Activated CD4-positive, alpha-beta memory T cell treated with anti-CD3 and anti-CD28 coated beads for 36 hours (primary cell): ENCODE measurements at regions of chr2 and their contacts with region 1.

Region 1: DNA sequence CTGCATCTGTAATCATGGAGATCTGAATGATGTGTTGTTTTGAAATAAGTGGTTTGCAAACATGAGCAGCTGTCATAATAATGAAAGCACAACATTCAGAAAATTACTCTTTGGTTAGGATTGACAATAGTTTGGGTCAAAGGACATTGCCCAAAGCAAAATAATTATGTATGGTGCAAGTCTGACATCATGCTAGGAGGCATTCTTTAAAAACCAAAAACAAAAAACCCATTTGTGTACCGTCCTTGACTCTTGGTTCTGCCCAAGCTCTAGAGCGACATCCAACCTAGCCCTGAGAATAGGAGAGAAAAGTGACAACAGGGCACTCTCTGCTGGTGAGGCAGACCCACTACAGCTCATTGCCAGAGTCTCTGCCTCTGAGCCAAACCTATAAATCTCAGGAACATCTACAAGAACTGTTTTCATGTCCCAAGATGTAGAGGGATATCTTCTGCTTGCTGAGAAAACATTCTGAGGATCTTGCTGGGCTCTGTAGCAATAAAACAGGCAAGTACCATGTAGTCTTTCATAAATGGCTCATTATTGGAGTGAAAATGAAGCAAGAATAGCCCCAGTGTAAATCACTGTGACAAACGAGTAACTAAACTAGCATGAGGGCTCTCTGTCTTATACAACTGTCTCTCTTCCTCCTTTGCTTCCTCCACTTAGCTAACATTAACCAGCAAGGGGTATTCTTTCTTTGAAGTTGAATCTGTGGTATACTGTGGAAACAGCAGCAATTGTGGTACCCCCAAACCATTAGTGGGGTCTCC is 266.8 kb upstream of the CXCR4 start:
- DNase-seq: peak; percentile 60
- H3K4me3 Mint-ChIP-seq: no peak overlapping the region
- H3K27ac Mint-ChIP-seq: peak overlapping the region; percentile 96
- H3K4me1 Mint-ChIP-seq: peaks cover 45% of the 10 kb centered on the region
- H3K27me3 Mint-ChIP-seq: no peaks in the 10 kb centered on the region

Region 2: GRCh38 chr2:135797497-135798274 is 587.0 kb before region 1 on chr2:
- CTCF ChIA-PET with region 1: interaction called, 21 read pairs
- POLR2A ChIA-PET with region 1: no interaction called
- intact Hi-C with region 1: no loop called
- DNase-seq: peak; percentile 89
- H3K4me3 Mint-ChIP-seq: no peak overlapping the region
- H3K27ac Mint-ChIP-seq: no peak overlapping the region
- H3K4me1 Mint-ChIP-seq: peaks cover 12% of the 10 kb centered on the region
- H3K27me3 Mint-ChIP-seq: no peaks in the 10 kb centered on the region

Region 3: DNA sequence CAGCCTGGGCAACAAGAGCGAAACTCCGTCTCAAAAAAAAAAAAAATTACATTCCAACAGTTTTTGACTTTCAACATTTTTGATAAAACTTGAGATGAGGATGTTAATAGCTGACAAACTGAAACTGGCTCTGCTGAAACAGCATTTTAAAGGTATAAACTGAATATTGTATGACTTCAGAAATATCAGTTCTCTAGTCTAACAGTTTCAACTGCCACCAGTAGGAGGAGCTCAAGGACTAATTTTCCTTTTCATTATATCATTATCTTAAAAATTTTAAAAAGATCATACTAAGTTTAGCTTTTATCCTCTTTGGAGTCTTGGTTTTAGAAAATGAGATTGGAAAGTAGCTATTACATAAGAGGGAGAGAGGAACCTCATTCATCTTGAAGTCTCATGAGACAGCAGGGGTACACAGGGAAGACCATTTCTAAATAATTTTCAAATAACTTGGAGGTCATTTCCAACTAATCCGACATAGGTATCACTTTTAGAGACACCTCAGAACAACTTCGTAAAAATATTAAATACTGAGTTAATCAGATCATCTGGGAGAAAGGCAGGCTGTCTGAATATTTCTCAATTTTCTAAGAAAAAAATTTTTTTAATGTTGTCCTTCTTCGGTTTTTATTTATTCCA is 470.9 kb before region 1 on chr2:
- CTCF ChIA-PET with region 1: interaction called, 69 read pairs
- POLR2A ChIA-PET with region 1: interaction called, 4 read pairs
- intact Hi-C with region 1: loop called (anchors 1 kb)
- DNase-seq: no peak
- H3K4me3 Mint-ChIP-seq: no peak overlapping the region
- H3K27ac Mint-ChIP-seq: no peak overlapping the region
- H3K4me1 Mint-ChIP-seq: peaks cover 14% of the 10 kb centered on the region
- H3K27me3 Mint-ChIP-seq: no peaks in the 10 kb centered on the region

Region 4: GRCh38 chr2:135997380-135997779 is 387.3 kb before region 1 on chr2:
- CTCF ChIA-PET with region 1: no interaction called
- POLR2A ChIA-PET with region 1: no interaction called
- intact Hi-C with region 1: no loop called
- DNase-seq: no peak
- H3K4me3 Mint-ChIP-seq: no peak overlapping the region
- H3K27ac Mint-ChIP-seq: no peak overlapping the region
- H3K4me1 Mint-ChIP-seq: peaks cover 11% of the 10 kb centered on the region
- H3K27me3 Mint-ChIP-seq: no peaks in the 10 kb centered on the region

Region 5: GRCh38 chr2:136019306-136019705 is 365.4 kb before region 1 on chr2:
- CTCF ChIA-PET with region 1: no interaction called
- POLR2A ChIA-PET with region 1: no interaction called
- intact Hi-C with region 1: no loop called
- DNase-seq: no peak
- H3K4me3 Mint-ChIP-seq: no peak overlapping the region
- H3K27ac Mint-ChIP-seq: no peak overlapping the region
- H3K4me1 Mint-ChIP-seq: peaks cover 5% of the 10 kb centered on the region
- H3K27me3 Mint-ChIP-seq: no peaks in the 10 kb centered on the region

Region 6: DNA sequence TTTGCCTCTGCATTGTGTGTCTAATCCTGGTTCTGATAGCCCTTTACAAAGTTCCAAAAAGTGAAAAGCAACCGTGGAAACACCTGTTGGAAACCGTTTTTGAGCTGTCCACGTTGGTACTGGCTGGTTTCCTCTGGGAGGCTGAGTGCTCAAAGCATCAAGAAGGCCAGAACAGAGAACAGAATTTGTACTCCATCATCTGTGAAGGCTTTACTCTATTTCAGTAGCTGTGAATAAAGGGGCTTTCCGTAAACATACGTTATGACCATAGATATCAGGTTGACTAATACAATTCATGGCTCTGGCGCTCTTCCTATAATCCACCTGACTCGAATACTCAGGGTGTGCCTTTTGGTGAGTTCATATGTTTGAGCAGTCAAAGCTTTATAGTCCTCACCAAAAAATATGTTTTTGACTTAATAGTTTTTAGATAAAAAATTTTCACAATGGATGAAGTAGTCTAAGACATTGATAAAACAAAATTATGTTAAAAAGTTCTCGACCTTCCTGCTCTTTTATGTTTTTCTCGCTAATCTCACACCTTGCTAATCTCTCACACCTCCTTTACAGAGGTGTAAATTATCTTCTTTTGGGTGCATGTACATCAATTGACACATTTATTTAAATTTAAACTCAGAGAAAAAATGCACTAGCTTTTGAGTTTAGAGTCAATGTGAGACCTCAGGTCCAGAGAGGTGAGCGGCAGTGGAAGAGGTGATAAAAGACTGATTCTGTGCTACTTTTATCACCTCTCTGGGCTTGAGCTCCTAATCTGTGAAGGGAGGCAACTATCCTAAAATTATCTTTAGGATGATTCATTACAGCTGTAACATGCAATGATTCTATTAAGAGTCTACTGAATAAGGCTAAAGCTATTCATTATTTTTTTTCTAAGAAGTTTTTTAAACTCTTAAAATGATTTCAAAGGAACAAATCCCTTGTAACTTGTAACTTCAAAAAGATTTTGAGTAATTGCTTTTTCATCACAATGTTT is 332.1 kb before region 1 on chr2:
- CTCF ChIA-PET with region 1: interaction called, 17 read pairs
- POLR2A ChIA-PET with region 1: interaction called, 12 read pairs
- intact Hi-C with region 1: loop called (anchors 1 kb)
- DNase-seq: peak; percentile 35
- H3K4me3 Mint-ChIP-seq: peak overlapping the region; percentile 57
- H3K27ac Mint-ChIP-seq: peak overlapping the region; percentile 99
- H3K4me1 Mint-ChIP-seq: peaks cover 86% of the 10 kb centered on the region
- H3K27me3 Mint-ChIP-seq: no peaks in the 10 kb centered on the region

Region 7: DNA sequence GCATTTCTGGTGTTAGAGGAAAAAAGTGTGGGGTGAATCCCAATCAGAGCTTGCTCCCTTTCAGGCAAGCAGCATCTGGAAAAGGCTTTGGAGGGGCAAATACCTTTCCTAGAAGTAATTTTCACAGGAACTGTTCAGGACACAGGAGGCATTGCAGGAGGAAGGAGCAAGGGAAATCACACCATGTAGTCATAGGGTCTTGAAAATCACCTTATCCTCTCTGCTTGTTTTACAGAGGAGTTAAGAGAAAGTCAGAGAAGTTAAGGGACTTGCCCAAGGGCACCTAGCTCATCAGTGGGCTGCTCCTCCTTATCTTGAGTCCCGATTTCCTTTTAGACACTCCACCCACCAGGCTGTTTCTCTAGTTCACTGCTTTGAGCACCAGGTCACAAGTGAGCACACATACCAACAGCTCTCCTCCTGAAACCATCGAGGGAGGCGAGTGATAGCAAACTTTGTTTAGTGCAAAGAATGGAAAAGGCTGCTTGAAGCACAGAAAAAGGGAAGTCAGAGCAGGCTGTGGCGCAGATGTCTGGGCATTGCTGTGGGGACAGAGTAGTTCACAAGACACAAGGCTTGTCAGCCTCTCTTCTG is 177.6 kb before region 1 on chr2:
- CTCF ChIA-PET with region 1: no interaction called
- POLR2A ChIA-PET with region 1: no interaction called
- intact Hi-C with region 1: loop called (anchors 1 kb)
- DNase-seq: peak; percentile 65
- H3K4me3 Mint-ChIP-seq: peak overlapping the region; percentile 3
- H3K27ac Mint-ChIP-seq: peak overlapping the region; percentile 96
- H3K4me1 Mint-ChIP-seq: peaks cover 46% of the 10 kb centered on the region
- H3K27me3 Mint-ChIP-seq: no peaks in the 10 kb centered on the region

Region 8: GRCh38 chr2:136327162-136327852 is 57.4 kb before region 1 on chr2:
- CTCF ChIA-PET with region 1: no interaction called
- POLR2A ChIA-PET with region 1: interaction called, 25 read pairs
- intact Hi-C with region 1: loop called (anchors 1 kb)
- DNase-seq: peak; percentile 93
- H3K4me3 Mint-ChIP-seq: peak overlapping the region; percentile 60
- H3K27ac Mint-ChIP-seq: peak overlapping the region; percentile 90
- H3K4me1 Mint-ChIP-seq: peaks cover 73% of the 10 kb centered on the region
- H3K27me3 Mint-ChIP-seq: no peaks in the 10 kb centered on the region